ENCODE measurements at regions of chr1 and their contacts with region 1.

Region 1: DNA sequence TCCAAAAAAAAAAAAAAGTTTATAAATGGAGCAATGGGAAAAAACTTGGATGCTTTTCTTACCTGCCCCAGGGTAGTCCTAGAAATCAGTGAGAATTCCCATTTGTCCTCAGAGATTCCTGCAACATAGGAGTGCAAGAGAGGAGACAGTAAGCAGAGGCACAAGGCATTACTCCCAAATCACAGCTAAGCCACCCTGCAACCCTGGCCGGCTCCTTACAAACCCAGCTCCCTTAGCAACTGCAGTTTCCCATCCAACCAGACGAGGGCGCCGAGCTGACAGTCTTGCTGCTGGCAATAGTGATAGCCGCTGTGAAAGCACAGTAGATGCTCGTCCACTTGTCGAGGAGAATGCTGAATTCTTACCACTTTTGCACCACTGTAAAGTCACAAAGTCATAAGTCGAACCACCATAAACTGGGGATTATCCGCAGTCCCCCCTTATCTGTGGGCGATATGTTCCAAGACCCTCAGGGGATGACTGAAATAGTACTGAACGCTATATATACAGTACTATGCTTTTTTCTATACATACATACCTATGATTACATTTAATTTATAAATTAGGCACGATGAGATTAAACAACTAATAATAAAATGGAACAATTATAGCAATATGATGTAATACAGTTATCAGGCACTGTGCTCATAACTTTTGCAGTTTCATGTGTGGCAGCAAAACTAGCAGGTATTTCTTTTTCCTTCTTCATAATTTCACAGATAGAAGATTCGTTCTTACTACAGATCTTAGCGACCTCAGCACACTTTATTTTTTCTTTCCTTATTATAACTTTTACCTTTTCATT is 6.0 kb upstream of the PITHD1 start:
- DNase-seq: peak; percentile 78 to 98 (median 92)

Region 2: GRCh38 chr1:23916209-23917131 is 144.2 kb after region 1 on chr1:
- intact Hi-C with region 1: loop called (anchors 1 kb)
- DNase-seq: peak in 9 of 10 donors; percentile 16 to 92 (median 34)